Natural killer cell (primary cell): ENCODE measurements at regions of chr18 and their contacts with region 1.

Region 1: DNA sequence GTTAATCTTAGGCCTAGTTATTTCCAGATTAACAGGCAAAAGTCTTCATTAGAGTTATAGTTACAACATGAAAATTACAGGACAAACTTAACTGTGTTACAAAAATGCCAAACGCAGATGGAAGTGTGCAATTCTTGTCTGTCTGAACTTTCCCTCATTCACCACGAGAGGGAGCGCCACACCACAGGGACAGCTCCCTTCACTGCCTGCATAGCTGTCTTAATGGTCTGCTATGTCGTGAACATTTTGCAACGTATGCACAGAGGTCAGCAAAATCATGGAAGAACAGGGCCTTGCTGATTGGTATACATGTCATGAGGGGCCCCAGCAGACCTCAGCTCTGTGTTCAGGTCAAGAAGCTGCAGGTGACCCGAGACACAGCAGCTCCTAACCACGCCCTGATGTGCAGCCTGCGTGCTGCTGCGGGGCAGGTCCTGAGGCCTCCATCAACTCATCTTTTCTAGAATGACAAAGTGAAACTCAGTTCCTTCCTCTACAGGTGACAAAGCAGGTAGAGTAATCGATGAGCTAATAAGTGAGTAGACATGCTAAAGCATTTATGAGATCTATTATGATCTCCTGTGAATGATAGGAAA is 78.8 kb upstream of the ATP8B1 start:
- DNase-seq: peak; percentile 16 to 72
- ATAC-seq: peak in 2 of 3 donors; percentile 76 to 91
- H3K4me3 ChIP-seq: no peak overlapping the region
- H3K4me3 Mint-ChIP-seq: no peak overlapping the region
- H3K27ac ChIP-seq: no peak overlapping the region
- H3K27ac Mint-ChIP-seq: no peak overlapping the region
- H3K4me1 ChIP-seq: no peaks in the 10 kb centered on the region
- H3K4me1 Mint-ChIP-seq: no peaks in the 10 kb centered on the region
- H3K27me3 ChIP-seq: no peaks in the 10 kb centered on the region
- H3K27me3 Mint-ChIP-seq: peaks cover 2 to 5% of the 10 kb centered on the region in 2 donors
- CTCF ChIP-seq: peak; percentile 73

Region 2: GRCh38 chr18:57748770-57749603 is 132.9 kb before region 1 on chr18:
- intact Hi-C with region 1: no loop called
- DNase-seq: no peak
- ATAC-seq: no peak
- H3K4me3 ChIP-seq: no peak overlapping the region
- H3K4me3 Mint-ChIP-seq: no peak overlapping the region
- H3K27ac ChIP-seq: no peak overlapping the region
- H3K27ac Mint-ChIP-seq: no peak overlapping the region
- H3K4me1 ChIP-seq: no peaks in the 10 kb centered on the region
- H3K4me1 Mint-ChIP-seq: peaks cover 7 to 9% of the 10 kb centered on the region in 2 donors
- H3K27me3 ChIP-seq: no peaks in the 10 kb centered on the region
- H3K27me3 Mint-ChIP-seq: no peaks in the 10 kb centered on the region
- CTCF ChIP-seq: no peak

Region 3: GRCh38 chr18:58117786-58118403 is 236.0 kb after region 1 on chr18:
- intact Hi-C with region 1: loop called (anchors 2 kb)
- DNase-seq: no peak
- ATAC-seq: no peak
- H3K4me3 ChIP-seq: no peak overlapping the region
- H3K4me3 Mint-ChIP-seq: no peak overlapping the region
- H3K27ac ChIP-seq: no peak overlapping the region
- H3K27ac Mint-ChIP-seq: no peak overlapping the region
- H3K4me1 ChIP-seq: no peaks in the 10 kb centered on the region
- H3K4me1 Mint-ChIP-seq: peaks cover 5% of the 10 kb centered on the region in 2 donors
- H3K27me3 ChIP-seq: no peaks in the 10 kb centered on the region
- H3K27me3 Mint-ChIP-seq: no peaks in the 10 kb centered on the region
- CTCF ChIP-seq: no peak

Region 4: GRCh38 chr18:58180738-58181353 is 298.9 kb after region 1 on chr18:
- intact Hi-C with region 1: loop called (anchors 5 kb)
- DNase-seq: peak; percentile 34 to 78
- ATAC-seq: peak in 1 of 3 donors; percentile 72
- H3K4me3 ChIP-seq: no peak overlapping the region
- H3K4me3 Mint-ChIP-seq: no peak overlapping the region
- H3K27ac ChIP-seq: no peak overlapping the region
- H3K27ac Mint-ChIP-seq: no peak overlapping the region
- H3K4me1 ChIP-seq: no peaks in the 10 kb centered on the region
- H3K4me1 Mint-ChIP-seq: no peaks in the 10 kb centered on the region
- H3K27me3 ChIP-seq: no peaks in the 10 kb centered on the region
- H3K27me3 Mint-ChIP-seq: peaks cover 5 to 8% of the 10 kb centered on the region in 2 donors
- CTCF ChIP-seq: peak; percentile 83